Activated B cell treated with CpG ODN at 0.5 μM for 24 hours (primary cell): ENCODE measurements at regions of chr2 and their contacts with region 1.

Region 1: GRCh38 chr2:54723131-54723995 is at the start of gene EML6:
- DNase-seq: peak; percentile 97
- ATAC-seq: peak; percentile 95
- H3K4me3 Mint-ChIP-seq: peak within 1 kb of the TSS; percentile 95
- H3K27ac Mint-ChIP-seq: peak within 1 kb of the TSS; percentile 74
- H3K4me1 Mint-ChIP-seq: peaks cover 26% of the 10 kb centered on the region
- H3K27me3 Mint-ChIP-seq: peaks cover 9% of the 10 kb centered on the region
- CTCF ChIP-seq: no peak
- total RNA-seq, gene EML6: 25.3 and 31.5 TPM in 2 replicates

Region 2: DNA sequence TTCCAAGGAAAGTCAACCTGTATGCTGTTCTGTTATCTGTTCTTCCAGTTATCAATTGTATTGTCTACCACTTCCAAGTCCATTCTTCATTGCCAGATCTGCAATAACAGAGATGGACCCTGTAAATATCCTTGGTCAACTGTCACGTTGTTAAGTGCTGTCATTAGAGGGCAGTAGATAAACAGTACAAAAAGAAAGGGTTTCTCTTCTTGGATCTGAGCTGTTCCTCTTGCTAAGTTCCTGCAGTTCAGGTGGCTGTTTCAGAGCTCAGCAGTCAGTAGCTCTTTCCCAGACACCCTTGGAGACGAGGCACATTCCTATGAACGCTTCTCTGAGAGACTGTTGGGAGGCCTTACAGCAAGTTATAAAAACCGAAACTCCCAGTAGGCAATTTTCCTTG is 1912.9 kb before region 1 on chr2:
- CTCF ChIA-PET with region 1: no interaction called
- POLR2A ChIA-PET with region 1: no interaction called
- intact Hi-C with region 1: no loop called
- DNase-seq: no peak
- ATAC-seq: no peak
- H3K4me3 Mint-ChIP-seq: no peak overlapping the region
- H3K27ac Mint-ChIP-seq: no peak overlapping the region
- H3K4me1 Mint-ChIP-seq: no peaks in the 10 kb centered on the region
- H3K27me3 Mint-ChIP-seq: no peaks in the 10 kb centered on the region
- CTCF ChIP-seq: no peak

Region 3: DNA sequence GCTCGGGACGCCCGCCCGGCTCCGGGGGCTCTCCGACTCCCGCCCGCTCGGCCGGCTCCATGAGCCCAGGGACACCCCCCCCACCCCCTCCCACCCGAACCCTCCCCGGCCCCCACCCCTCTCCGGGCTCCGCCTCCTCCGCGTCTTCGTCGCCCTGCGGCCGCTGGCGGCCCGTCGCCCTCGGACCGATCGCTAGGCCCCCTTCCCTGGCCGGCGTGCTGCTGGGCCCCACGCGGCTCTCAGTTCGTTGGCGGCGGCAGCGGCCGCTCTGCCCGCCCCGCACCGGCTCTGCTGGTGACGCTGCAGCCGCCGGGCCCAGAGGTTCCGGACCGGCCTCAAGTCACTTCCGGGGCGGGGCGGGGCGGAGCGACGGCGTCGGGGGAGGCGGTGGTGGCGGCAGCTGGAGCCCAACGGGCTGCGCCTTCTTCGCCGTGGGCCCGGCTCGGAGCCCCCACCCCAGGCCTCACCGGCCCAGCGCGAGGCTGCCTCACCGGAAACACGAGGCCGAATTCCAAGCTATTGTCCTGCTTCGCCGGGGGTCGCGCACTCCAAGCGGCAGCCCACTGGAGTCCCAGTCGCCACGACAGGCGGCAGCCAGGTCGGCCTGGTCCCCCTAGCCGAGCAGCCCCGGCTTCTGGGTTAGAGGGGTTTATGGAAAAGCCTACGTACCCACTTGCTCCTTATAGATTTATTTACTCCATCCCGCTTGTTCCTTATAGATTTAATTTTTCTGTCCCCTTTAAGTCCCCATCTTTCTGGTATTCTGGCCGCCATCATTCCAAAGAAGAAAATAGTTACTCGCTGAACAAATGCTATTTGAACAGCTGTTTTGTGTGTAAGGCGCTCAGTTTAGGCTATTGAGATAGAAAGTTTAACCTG is 752.4 kb before region 1 on chr2 and contains the start of gene PSME4:
- CTCF ChIA-PET with region 1: no interaction called
- POLR2A ChIA-PET with region 1: interaction called, 4 read pairs
- intact Hi-C with region 1: loop called (anchors 2 kb)
- DNase-seq: peak; percentile 97
- ATAC-seq: peak; percentile 90
- H3K4me3 Mint-ChIP-seq: peak within 1 kb of the TSS; percentile 94
- H3K27ac Mint-ChIP-seq: peak within 1 kb of the TSS; percentile 94
- H3K4me1 Mint-ChIP-seq: peaks cover 49% of the 10 kb centered on the region
- H3K27me3 Mint-ChIP-seq: no peaks in the 10 kb centered on the region
- CTCF ChIP-seq: no peak
- total RNA-seq, gene PSME4: 73.2 and 74.3 TPM in 2 replicates

Region 4: GRCh38 chr2:54330162-54330925 is 393.0 kb before region 1 on chr2:
- CTCF ChIA-PET with region 1: no interaction called
- POLR2A ChIA-PET with region 1: no interaction called
- intact Hi-C with region 1: loop called (anchors 1 kb)
- DNase-seq: peak; percentile 77
- ATAC-seq: peak; percentile 96
- H3K4me3 Mint-ChIP-seq: peak overlapping the region; percentile 89
- H3K27ac Mint-ChIP-seq: peak overlapping the region; percentile 70
- H3K4me1 Mint-ChIP-seq: peaks cover 21% of the 10 kb centered on the region
- H3K27me3 Mint-ChIP-seq: peaks cover 13% of the 10 kb centered on the region
- CTCF ChIP-seq: no peak

Region 5: DNA sequence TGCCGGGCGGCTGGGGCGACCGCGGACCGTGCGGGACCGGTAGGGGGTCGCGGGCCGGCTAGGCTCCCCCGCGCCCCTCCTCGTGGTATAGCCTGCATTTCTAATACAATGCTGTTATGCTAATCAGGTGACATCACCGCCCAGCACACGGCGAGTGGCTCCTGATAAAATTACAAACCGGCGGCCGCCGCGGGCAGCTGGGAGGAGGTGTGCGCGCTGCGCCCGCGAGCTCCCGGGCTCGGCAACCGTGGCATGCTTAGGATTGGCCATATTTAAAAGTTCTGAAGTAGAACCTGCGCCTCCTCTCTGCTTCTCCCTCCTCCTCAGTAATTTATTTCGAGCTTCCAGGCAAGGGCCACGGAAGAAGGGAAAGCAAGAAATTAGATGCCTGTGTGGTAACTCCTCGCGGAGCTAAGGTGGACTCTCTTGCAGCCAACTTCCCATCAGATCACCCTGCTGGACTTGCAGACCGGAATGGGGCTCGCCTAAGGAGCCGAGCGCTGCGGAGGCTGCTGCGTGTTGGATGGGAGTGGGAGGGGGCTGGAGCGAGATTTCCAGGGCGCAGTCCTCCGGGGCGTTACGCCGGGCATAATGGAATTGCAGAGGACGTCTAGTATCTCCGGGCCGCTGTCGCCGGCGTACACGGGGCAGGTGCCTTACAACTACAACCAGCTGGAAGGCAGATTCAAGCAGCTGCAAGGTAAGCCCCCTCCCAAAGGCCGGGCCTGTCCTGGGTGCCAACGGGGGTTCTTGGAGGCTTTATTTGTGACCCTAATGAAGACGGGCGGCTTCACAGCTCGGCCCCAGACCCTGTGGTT is 165.0 kb before region 1 on chr2:
- CTCF ChIA-PET with region 1: no interaction called
- POLR2A ChIA-PET with region 1: no interaction called
- intact Hi-C with region 1: no loop called
- DNase-seq: peak; percentile 60
- ATAC-seq: peak; percentile 60
- H3K4me3 Mint-ChIP-seq: peak overlapping the region; percentile 89
- H3K27ac Mint-ChIP-seq: peak overlapping the region; percentile 94
- H3K4me1 Mint-ChIP-seq: peaks cover 50% of the 10 kb centered on the region
- H3K27me3 Mint-ChIP-seq: no peaks in the 10 kb centered on the region
- CTCF ChIP-seq: no peak

Region 6: DNA sequence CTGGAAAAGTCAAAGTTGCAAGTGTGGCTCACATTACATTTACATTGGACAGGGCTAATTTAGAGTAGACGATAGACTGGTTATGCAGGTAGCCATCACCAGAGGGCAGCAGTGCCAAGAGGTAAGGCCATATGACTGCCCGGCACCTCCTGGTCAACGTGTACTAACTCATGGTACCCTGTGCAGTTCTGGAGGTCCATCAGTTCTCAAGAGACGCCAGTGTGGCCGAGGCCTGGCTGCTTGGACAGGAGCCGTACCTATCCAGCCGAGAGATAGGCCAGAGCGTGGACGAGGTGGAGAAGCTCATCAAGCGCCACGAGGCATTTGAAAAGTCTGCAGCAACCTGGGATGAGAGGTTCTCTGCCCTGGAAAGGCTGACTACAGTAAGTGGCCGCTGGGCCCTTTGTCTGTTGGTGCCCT is 65.7 kb before region 1 on chr2:
- CTCF ChIA-PET with region 1: no interaction called
- POLR2A ChIA-PET with region 1: no interaction called
- intact Hi-C with region 1: no loop called
- DNase-seq: no peak
- ATAC-seq: peak; percentile 73
- H3K4me3 Mint-ChIP-seq: no peak overlapping the region
- H3K27ac Mint-ChIP-seq: peak overlapping the region; percentile 46
- H3K4me1 Mint-ChIP-seq: no peaks in the 10 kb centered on the region
- H3K27me3 Mint-ChIP-seq: no peaks in the 10 kb centered on the region
- CTCF ChIP-seq: no peak

Region 7: GRCh38 chr2:54755641-54756326 is 32.4 kb after region 1 on chr2:
- CTCF ChIA-PET with region 1: interaction called, 3 read pairs
- POLR2A ChIA-PET with region 1: interaction called, 10 read pairs
- intact Hi-C with region 1: loop called (anchors 1 kb)
- DNase-seq: no peak
- ATAC-seq: peak; percentile 67
- H3K4me3 Mint-ChIP-seq: peak overlapping the region; percentile 74
- H3K27ac Mint-ChIP-seq: peak overlapping the region; percentile 92
- H3K4me1 Mint-ChIP-seq: peaks cover 50% of the 10 kb centered on the region
- H3K27me3 Mint-ChIP-seq: no peaks in the 10 kb centered on the region
- CTCF ChIP-seq: no peak

Region 8: DNA sequence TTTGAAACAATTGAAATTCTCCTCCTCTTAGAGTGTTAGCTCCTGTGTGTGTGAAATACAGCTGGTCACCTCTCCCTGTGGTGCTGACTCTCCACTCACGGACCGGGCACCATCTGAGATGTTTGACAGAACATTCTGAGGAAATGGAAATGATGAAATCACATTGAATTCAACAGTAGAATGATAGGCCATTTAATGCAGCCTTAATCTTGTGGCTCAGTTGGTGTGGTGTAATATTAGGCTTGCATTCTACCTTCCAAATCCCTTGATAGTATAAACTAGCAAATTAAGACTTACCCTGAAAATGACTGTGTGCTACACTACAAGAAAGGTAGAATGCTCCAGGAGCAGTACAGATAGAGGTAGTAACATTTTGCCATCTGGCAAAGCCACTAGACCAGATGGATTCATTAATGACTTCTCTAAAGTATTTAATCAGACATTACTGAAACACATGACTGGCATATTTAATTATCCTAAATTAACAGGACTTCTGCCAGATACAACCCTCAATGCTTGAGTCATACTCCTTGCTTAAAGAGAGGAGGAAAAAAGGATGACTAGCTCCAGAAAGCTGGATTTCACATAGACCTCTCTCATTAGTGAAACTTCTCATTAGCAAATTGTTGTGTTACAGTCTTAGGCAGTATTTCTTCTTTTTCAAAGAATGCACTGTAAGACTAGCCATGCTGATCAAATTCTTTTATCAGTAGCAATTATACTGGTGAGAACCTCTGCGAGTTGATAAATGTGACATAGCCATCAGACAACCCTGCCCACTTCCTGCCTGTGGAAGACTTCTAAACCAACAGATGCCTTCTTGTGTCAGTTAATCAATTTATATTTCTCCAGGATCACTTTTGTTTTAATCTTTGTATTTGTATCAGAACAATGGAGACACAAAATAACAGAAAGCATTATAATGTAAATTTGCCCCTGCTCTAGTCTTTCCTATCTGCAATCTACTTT is 80.7 kb after region 1 on chr2:
- CTCF ChIA-PET with region 1: no interaction called
- POLR2A ChIA-PET with region 1: no interaction called
- intact Hi-C with region 1: no loop called
- DNase-seq: no peak
- ATAC-seq: no peak
- H3K4me3 Mint-ChIP-seq: no peak overlapping the region
- H3K27ac Mint-ChIP-seq: no peak overlapping the region
- H3K4me1 Mint-ChIP-seq: peaks cover 5% of the 10 kb centered on the region
- H3K27me3 Mint-ChIP-seq: no peaks in the 10 kb centered on the region
- CTCF ChIP-seq: no peak

Region 9: DNA sequence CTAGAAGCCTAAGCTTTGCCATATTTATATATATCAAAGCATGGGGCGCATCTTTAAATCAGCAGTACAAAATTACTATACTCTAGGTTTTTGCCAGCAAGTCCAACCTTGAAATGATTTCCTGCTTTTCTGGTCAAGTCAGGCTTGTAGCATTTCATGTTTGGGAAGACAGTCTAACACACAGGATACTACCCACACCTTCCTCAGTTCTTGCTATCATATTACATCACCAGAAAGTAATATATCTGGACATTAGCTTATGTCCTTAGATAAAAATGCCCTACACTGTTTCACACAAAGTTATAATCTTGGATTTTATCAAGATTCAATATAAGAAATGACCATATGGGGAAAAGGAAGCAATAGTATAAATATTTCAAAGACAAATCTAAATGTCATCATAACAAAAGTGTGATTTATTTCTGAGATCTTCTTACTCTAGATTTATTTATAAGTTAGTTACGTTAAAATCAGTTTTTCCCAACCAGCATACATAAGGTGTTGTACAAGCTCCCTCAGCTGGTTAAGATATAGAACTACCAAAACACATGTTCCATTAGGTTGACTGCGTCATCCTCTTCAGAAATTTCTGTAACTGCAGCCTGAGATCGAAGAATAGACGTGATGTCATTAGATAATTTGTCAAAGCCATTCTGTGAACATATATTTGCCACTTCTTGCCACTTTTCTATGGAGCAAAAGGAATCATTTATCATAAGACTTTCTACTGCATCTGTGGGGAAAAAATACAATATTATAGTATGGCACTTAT is 452.1 kb after region 1 on chr2:
- CTCF ChIA-PET with region 1: interaction called, 4 read pairs
- POLR2A ChIA-PET with region 1: no interaction called
- intact Hi-C with region 1: loop called (anchors 5 kb)
- DNase-seq: no peak
- ATAC-seq: peak; percentile 86
- H3K4me3 Mint-ChIP-seq: peak overlapping the region; percentile 8
- H3K27ac Mint-ChIP-seq: no peak overlapping the region
- H3K4me1 Mint-ChIP-seq: peaks cover 7% of the 10 kb centered on the region
- H3K27me3 Mint-ChIP-seq: no peaks in the 10 kb centered on the region
- CTCF ChIP-seq: no peak

Region 10: GRCh38 chr2:55617175-55618024 is 894.0 kb after region 1 on chr2 and contains the start of gene PPP4R3B:
- CTCF ChIA-PET with region 1: no interaction called
- POLR2A ChIA-PET with region 1: no interaction called
- intact Hi-C with region 1: loop called (anchors 1 kb)
- DNase-seq: peak; percentile 96
- ATAC-seq: peak; percentile 81
- H3K4me3 Mint-ChIP-seq: no peak within 1 kb of the TSS
- H3K27ac Mint-ChIP-seq: no peak within 1 kb of the TSS
- H3K4me1 Mint-ChIP-seq: peaks cover 22% of the 10 kb centered on the region
- H3K27me3 Mint-ChIP-seq: no peaks in the 10 kb centered on the region
- CTCF ChIP-seq: no peak
- total RNA-seq, gene PPP4R3B: 75.6 and 82.4 TPM in 2 replicates